Heart right ventricle (tissue), 16 donors: ENCODE measurements at regions of chr12 and their contacts with region 1.

Region 1: DNA sequence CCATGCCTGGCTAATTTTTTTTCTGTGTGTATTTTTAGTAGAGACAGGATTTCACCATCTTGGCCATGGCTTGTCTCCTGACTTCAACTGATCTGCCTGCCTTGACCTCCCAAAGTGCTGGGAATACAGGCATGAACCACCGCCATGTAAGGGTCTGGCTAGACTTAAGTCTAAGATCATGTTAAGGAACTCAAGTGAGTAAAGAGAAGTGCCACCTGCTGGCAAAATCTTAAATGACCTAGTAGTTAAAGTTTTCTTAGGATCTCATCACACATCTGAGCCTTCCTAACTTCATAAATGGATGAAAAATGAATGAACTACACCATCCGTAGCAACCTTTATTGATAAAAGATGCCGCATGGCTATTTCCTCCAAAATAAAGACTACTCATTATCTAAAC is 1.7 kb upstream of the C12orf56 start:
- DNase-seq: no peak
- ATAC-seq: no peak
- H3K4me3 ChIP-seq: no peak overlapping the region
- H3K27ac ChIP-seq: no peak overlapping the region
- H3K4me1 ChIP-seq: peaks cover 0 to 23% (median 11%) of the 10 kb centered on the region in 9 donors
- H3K27me3 ChIP-seq: peaks cover 0 to 40% (median 28%) of the 10 kb centered on the region in 7 donors
- CTCF ChIP-seq: peak in 6 of 9 donors; percentile 15 to 44 (median 18)

Region 2: DNA sequence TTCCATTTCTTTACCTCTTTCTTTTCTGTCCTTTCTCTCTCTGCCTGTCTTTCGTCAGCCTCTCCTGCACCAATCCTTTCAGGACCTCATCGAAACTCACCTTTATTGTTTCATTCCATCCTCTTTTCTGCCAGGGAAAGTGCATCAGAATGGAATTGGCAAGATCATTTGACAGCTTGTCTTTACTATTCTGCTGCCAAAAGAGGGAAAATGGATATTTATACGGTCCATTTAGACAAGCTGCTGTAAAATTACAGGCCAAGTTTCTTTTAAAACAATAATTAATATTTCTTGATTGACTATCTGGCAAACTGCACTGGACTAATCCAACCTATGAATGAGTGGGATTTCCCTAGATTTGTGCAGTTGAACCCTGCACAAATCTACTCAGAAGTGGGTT is 555.3 kb before region 1 on chr12:
- intact Hi-C with region 1: loop called in 1 of 10 experiments (anchors 10 kb)
- DNase-seq: no peak
- ATAC-seq: no peak
- H3K4me3 ChIP-seq: no peak overlapping the region
- H3K27ac ChIP-seq: no peak overlapping the region
- H3K4me1 ChIP-seq: no peaks in the 10 kb centered on the region
- H3K27me3 ChIP-seq: no peaks in the 10 kb centered on the region
- CTCF ChIP-seq: no peak

Region 3: GRCh38 chr12:64147011-64147631 is 245.1 kb before region 1 on chr12:
- intact Hi-C with region 1: no loop called
- DNase-seq: no peak
- ATAC-seq: no peak
- H3K4me3 ChIP-seq: no peak overlapping the region
- H3K27ac ChIP-seq: no peak overlapping the region
- H3K4me1 ChIP-seq: no peaks in the 10 kb centered on the region
- H3K27me3 ChIP-seq: no peaks in the 10 kb centered on the region
- CTCF ChIP-seq: no peak

Region 4: GRCh38 chr12:64269171-64269570 is 123.0 kb before region 1 on chr12:
- intact Hi-C with region 1: loop called in 1 of 10 experiments (anchors 10 kb)
- DNase-seq: no peak
- ATAC-seq: no peak
- H3K4me3 ChIP-seq: no peak overlapping the region
- H3K27ac ChIP-seq: no peak overlapping the region
- H3K4me1 ChIP-seq: no peaks in the 10 kb centered on the region
- H3K27me3 ChIP-seq: no peaks in the 10 kb centered on the region
- CTCF ChIP-seq: no peak